Caco-2 (cell line): ENCODE measurements at regions of chr13 and their contacts with region 1.

Region 1: GRCh38 chr13:44988973-44989817 is at the starts of genes GPALPP1 and NUFIP1:
- DNase-seq: peak; percentile 95 to 96
- H3K4me3 ChIP-seq: peak within 1 kb of the TSS; percentile 100
- H3K4me3 Mint-ChIP-seq: peak within 1 kb of the TSS; percentile 91
- H3K27ac Mint-ChIP-seq: peak within 1 kb of the TSS; percentile 99
- H3K4me1 ChIP-seq: peaks cover 12% of the 10 kb centered on the region
- H3K4me1 Mint-ChIP-seq: peaks cover 16% of the 10 kb centered on the region
- H3K27me3 ChIP-seq: no peaks in the 10 kb centered on the region
- H3K27me3 Mint-ChIP-seq: no peaks in the 10 kb centered on the region
- CTCF ChIP-seq: no peak
- total RNA-seq, gene GPALPP1: 32.2 and 36.2 TPM in 2 replicates
- total RNA-seq, gene NUFIP1: 15.2 and 15.4 TPM in 2 replicates

Region 2: DNA sequence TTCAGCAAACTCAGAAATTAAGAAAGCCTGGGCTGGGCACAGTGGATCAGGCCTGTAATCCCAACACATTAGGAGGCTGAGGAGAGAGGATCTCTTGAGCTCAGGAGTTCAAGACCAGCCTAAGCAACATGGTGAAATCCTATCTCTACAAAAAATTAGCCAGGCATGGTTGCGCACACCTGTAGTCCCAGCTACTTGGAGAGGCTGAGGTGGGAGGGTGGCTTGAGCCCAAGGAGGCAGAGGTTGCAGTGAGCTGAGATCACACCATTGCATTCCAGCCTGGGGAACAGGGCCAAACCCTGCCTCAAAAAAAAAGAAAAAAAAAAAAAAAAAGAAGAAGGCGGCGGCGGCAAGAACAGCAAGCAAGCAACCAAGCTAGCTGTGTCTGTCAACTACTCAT is 439.7 kb before region 1 on chr13:
- CTCF ChIA-PET with region 1: no interaction called
- POLR2A ChIA-PET with region 1: no interaction called
- intact Hi-C with region 1: no loop called
- DNase-seq: no peak
- H3K4me3 ChIP-seq: no peak overlapping the region
- H3K4me3 Mint-ChIP-seq: no peak overlapping the region
- H3K27ac Mint-ChIP-seq: no peak overlapping the region
- H3K4me1 ChIP-seq: no peaks in the 10 kb centered on the region
- H3K4me1 Mint-ChIP-seq: no peaks in the 10 kb centered on the region
- H3K27me3 ChIP-seq: no peaks in the 10 kb centered on the region
- H3K27me3 Mint-ChIP-seq: no peaks in the 10 kb centered on the region
- CTCF ChIP-seq: no peak

Region 3: GRCh38 chr13:44601591-44601990 is 387.6 kb before region 1 on chr13:
- CTCF ChIA-PET with region 1: no interaction called
- POLR2A ChIA-PET with region 1: no interaction called
- intact Hi-C with region 1: no loop called
- DNase-seq: peak in 1 of 2 experiments; percentile 32
- H3K4me3 ChIP-seq: no peak overlapping the region
- H3K4me3 Mint-ChIP-seq: no peak overlapping the region
- H3K27ac Mint-ChIP-seq: no peak overlapping the region
- H3K4me1 ChIP-seq: peaks cover 5% of the 10 kb centered on the region; the same call in 1 of the 2 replicates
- H3K4me1 Mint-ChIP-seq: no peaks in the 10 kb centered on the region
- H3K27me3 ChIP-seq: no peaks in the 10 kb centered on the region
- H3K27me3 Mint-ChIP-seq: no peaks in the 10 kb centered on the region
- CTCF ChIP-seq: no peak

Region 4: DNA sequence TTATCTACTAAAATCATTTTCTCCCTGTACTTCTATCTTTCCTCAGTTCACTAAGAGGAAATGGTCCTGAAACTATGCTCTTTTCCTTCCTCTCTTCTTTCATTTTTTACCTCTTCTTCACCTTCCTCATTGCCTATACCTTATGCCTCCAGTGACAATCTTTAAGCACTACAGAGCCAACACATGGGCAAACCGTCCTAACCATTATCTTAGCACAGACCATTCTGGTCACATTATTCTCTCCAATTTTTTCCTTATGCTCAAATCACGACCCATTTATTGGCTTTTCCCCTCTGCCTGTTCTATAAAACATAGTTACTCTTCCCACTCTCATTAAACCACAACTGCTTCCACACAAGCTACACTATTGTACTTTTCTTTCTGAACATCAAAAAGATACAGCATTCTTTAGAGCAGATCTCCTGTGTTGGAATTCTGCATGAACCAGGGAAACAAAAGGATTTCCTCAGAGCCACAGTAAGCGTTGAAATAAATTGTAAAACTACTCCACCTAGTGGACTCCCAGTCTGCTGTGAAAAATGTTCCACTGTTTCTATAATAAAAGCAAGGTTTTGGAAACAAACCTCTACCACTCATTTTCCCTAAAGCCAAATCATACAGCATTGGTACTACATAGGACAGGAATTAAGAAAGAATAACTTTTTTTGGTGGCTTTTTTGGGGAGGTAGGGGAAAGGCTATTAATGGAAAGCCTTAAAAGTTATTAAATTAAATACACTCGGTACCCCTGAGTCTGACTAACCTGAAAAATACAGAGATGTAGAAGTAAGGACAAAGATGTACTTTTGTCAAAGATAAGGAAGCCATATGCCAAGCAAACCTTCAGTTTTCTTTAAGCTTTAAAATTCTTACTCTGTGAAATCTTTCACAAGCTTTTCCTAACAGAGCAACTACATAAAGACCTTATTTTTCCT is 19.4 kb before region 1 on chr13:
- CTCF ChIA-PET with region 1: no interaction called
- POLR2A ChIA-PET with region 1: no interaction called
- intact Hi-C with region 1: loop called (anchors 2 kb)
- DNase-seq: peak in 1 of 2 experiments; percentile 62
- H3K4me3 ChIP-seq: no peak overlapping the region
- H3K4me3 Mint-ChIP-seq: no peak overlapping the region
- H3K27ac Mint-ChIP-seq: no peak overlapping the region
- H3K4me1 ChIP-seq: peaks cover 14% of the 10 kb centered on the region
- H3K4me1 Mint-ChIP-seq: peaks cover 14% of the 10 kb centered on the region
- H3K27me3 ChIP-seq: no peaks in the 10 kb centered on the region
- H3K27me3 Mint-ChIP-seq: no peaks in the 10 kb centered on the region
- CTCF ChIP-seq: peak; percentile 74 to 81